Prostate gland (tissue), 2 donors: ENCODE measurements at regions of chr6 and their contacts with region 1.

Region 1: GRCh38 chr6:3118353-3119039 is at the start of gene BPHL:
- DNase-seq: peak; percentile 96
- H3K4me3 ChIP-seq: peak within 1 kb of the TSS; percentile 84 to 86
- H3K27ac ChIP-seq: peak within 1 kb of the TSS; percentile 95 to 96
- H3K4me1 ChIP-seq: no peaks in the 10 kb centered on the region
- H3K27me3 ChIP-seq: no peaks in the 10 kb centered on the region
- CTCF ChIP-seq: no peak
- POLR2A ChIP-seq: peak; percentile 87
- total RNA-seq, gene BPHL: 16.5 to 17.7 TPM

Region 2: GRCh38 chr6:3068329-3069214 is 49.9 kb before region 1 on chr6 and contains the start of gene RIPK1:
- intact Hi-C with region 1: loop called (anchors 2 kb)
- DNase-seq: peak; percentile 92
- H3K4me3 ChIP-seq: peak within 1 kb of the TSS; percentile 86 to 94
- H3K27ac ChIP-seq: peak within 1 kb of the TSS; percentile 98 to 99
- H3K4me1 ChIP-seq: no peaks in the 10 kb centered on the region
- H3K27me3 ChIP-seq: no peaks in the 10 kb centered on the region
- CTCF ChIP-seq: peak in 3 of 4 experiments; percentile 41 to 75 (median 55)
- POLR2A ChIP-seq: peak; percentile 84
- total RNA-seq, gene RIPK1: 21.3 to 23.0 TPM

Region 3: DNA sequence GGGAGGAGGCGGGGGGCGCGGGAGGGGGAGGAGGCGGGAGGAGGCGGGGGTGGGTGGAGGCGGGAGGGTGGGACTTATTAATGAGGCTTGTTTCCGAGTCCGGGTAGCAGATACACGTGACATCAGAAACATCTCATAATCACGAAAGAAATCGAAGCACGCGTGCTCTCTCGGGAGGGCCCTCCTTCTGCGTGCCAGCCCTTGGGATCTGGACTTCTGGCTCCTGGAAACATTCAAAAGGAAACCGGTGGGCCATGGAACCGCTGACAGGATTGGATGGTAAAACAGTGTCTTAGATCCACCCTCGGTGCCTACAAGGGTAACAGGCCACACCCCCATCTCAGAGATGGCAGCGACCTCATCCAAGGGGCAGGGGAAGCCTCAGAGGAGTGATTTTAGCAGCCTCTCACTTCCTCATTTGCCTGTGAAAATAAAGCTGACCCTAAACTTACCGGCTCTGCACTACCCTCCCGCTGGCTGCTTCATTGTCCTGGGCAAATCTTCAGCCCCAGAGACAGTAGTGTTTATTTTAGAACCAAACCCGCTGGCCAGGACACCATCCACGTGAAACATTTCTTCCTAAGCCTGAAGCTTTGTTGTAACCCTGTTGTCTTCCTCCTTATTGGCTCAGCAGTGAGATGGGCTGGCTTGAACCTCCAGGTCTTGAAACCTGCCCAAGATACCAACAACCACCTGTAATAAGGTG is 237.7 kb after region 1 on chr6:
- intact Hi-C with region 1: no loop called
- DNase-seq: peak; percentile 88
- H3K4me3 ChIP-seq: peak overlapping the region; percentile 13 to 22
- H3K27ac ChIP-seq: peak overlapping the region; percentile 94
- H3K4me1 ChIP-seq: peaks cover 26% of the 10 kb centered on the region
- H3K27me3 ChIP-seq: no peaks in the 10 kb centered on the region
- CTCF ChIP-seq: no peak
- POLR2A ChIP-seq: no peak

Region 4: GRCh38 chr6:4664117-4664626 is 1545.7 kb after region 1 on chr6:
- intact Hi-C with region 1: no loop called
- DNase-seq: no peak
- H3K4me3 ChIP-seq: no peak overlapping the region
- H3K27ac ChIP-seq: no peak overlapping the region
- H3K4me1 ChIP-seq: no peaks in the 10 kb centered on the region
- H3K27me3 ChIP-seq: no peaks in the 10 kb centered on the region
- CTCF ChIP-seq: no peak
- POLR2A ChIP-seq: no peak